ENCODE measurements at regions of chr9 and their contacts with region 1.

Region 1: GRCh38 chr9:613771-614347 is 227.6 kb upstream of the DMRT1 start:
- DNase-seq: peak; percentile 69 to 87
- ATAC-seq: peak; percentile 94 to 99 (median 98)
- H3K4me3 ChIP-seq: peak overlapping the region; percentile 24
- H3K27ac ChIP-seq: peak overlapping the region; percentile 18
- H3K4me1 ChIP-seq: peaks cover 4% of the 10 kb centered on the region
- H3K27me3 ChIP-seq: no peaks in the 10 kb centered on the region
- CTCF ChIP-seq: peak; percentile 76

Region 2: GRCh38 chr9:385818-386398 is 228.0 kb before region 1 on chr9:
- intact Hi-C with region 1: loop called in 1 of 2 experiments (anchors 10 kb)
- DNase-seq: no peak
- ATAC-seq: peak; percentile 83 to 87 (median 85)
- H3K4me3 ChIP-seq: no peak overlapping the region
- H3K27ac ChIP-seq: no peak overlapping the region
- H3K4me1 ChIP-seq: no peaks in the 10 kb centered on the region
- H3K27me3 ChIP-seq: no peaks in the 10 kb centered on the region
- CTCF ChIP-seq: peak; percentile 84

Region 3: DNA sequence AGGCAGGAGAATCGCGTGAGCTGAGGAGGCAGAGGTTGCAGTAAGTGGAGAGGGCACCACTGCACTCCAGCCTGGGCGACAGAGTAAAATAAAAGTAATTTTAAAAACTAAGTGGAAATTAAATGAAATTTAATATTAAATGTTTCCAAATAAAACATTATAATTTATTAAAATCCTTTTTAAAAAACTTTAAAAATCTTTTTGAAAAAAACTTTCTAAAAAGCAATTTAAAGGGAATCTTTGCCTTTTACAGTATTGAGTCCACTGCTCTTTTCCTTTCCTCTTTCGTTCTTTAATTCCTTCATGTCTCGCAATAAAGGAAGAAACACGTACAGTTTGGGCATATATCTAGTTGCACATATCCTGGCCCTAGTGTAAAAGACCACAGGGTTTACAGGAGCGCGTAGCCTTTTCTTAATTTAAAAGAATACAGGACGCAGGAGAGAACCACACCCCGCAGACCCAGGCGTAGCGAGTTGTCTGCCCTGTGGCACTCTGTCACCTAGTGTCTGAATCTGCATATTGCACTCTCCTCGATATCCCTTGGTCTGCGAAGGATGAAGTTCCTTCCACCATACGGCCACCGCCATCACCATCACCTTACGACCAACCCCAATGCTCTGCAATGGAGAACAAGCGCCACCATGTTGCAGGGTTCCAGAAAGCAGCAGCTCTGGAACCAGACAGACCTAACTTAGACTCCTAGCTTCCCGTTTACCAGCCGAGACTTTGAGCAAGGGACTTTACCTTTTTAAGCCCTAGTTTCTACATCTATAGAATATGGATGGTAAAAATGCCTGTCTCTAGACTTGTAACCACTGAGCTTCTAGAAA is 150.0 kb after region 1 on chr9:
- intact Hi-C with region 1: loop called (anchors 1 kb)
- DNase-seq: peak; percentile 41 to 77
- ATAC-seq: peak; percentile 96 to 100 (median 98)
- H3K4me3 ChIP-seq: peak overlapping the region; percentile 52
- H3K27ac ChIP-seq: no peak overlapping the region
- H3K4me1 ChIP-seq: peaks cover 3% of the 10 kb centered on the region
- H3K27me3 ChIP-seq: peaks cover 0 to 2% (median 0%) of the 10 kb centered on the region in 3 donors
- CTCF ChIP-seq: peak; percentile 97

Region 4: GRCh38 chr9:806285-807156 is 192.7 kb after region 1 on chr9:
- intact Hi-C with region 1: loop called in 1 of 2 experiments (anchors 1 kb)
- DNase-seq: no peak
- ATAC-seq: peak in 1 of 4 donors; percentile 54
- H3K4me3 ChIP-seq: no peak overlapping the region
- H3K27ac ChIP-seq: no peak overlapping the region
- H3K4me1 ChIP-seq: no peaks in the 10 kb centered on the region
- H3K27me3 ChIP-seq: no peaks in the 10 kb centered on the region
- CTCF ChIP-seq: peak; percentile 66

Region 5: DNA sequence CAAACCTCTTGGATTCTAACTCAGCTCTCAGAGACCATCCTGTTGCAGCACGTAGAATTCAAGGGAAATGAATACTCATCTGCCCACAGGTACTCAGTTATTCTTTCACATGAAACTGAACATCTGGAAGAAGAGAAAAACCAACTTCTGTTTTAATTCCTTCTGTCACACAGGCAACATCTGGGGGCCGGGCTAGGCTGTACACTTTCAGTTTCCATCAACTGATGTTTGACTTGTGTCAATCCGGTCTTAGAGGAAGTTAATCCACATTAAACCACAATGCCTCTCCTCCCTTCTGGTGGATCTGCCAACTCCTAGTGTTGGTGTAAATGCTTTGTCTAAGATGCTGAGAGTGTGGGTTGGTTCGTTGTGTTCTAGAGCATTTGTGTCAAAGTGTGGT is 380.1 kb after region 1 on chr9:
- intact Hi-C with region 1: loop called in 1 of 2 experiments (anchors 10 kb)
- DNase-seq: no peak
- ATAC-seq: no peak
- H3K4me3 ChIP-seq: no peak overlapping the region
- H3K27ac ChIP-seq: no peak overlapping the region
- H3K4me1 ChIP-seq: no peaks in the 10 kb centered on the region
- H3K27me3 ChIP-seq: peaks cover 0 to 10% (median 0%) of the 10 kb centered on the region in 3 donors
- CTCF ChIP-seq: no peak

Region 6: GRCh38 chr9:1009101-1009707 is 395.3 kb after region 1 on chr9:
- intact Hi-C with region 1: loop called in 1 of 2 experiments (anchors 10 kb)
- DNase-seq: peak; percentile 78 to 91
- ATAC-seq: peak; percentile 93 to 98 (median 95)
- H3K4me3 ChIP-seq: no peak overlapping the region
- H3K27ac ChIP-seq: no peak overlapping the region
- H3K4me1 ChIP-seq: no peaks in the 10 kb centered on the region
- H3K27me3 ChIP-seq: no peaks in the 10 kb centered on the region
- CTCF ChIP-seq: peak; percentile 97